Heart left ventricle (tissue), 16 donors: ENCODE measurements at regions of chr15 and their contacts with region 1.

Region 1: GRCh38 chr15:74906446-74907162 is at the start of gene FAM219B:
- DNase-seq: peak; percentile 94 to 96 (median 96)
- ATAC-seq: peak; percentile 92 to 96 (median 92)
- H3K4me3 ChIP-seq: peak within 1 kb of the TSS; percentile 62 to 99 (median 86)
- H3K27ac ChIP-seq: peak within 1 kb of the TSS; percentile 90 to 99 (median 96)
- H3K4me1 ChIP-seq: peaks cover 0 to 31% (median 21%) of the 10 kb centered on the region in 12 donors
- H3K27me3 ChIP-seq: no peaks in the 10 kb centered on the region
- CTCF ChIP-seq: peak in 1 of 12 donors; percentile 8
- POLR2A ChIP-seq: peak; percentile 62 to 92
- total RNA-seq, gene FAM219B: 37.0 to 110 (median 88.8) TPM

Region 2: GRCh38 chr15:74857082-74857655 is 49.4 kb before region 1 on chr15:
- intact Hi-C with region 1: loop called in 1 of 10 experiments (anchors 5 kb)
- DNase-seq: no peak
- ATAC-seq: peak in 2 of 4 donors; percentile 61 to 65
- H3K4me3 ChIP-seq: no peak overlapping the region
- H3K27ac ChIP-seq: peak overlapping the region in 1 of 12 donors; percentile 17
- H3K4me1 ChIP-seq: peaks cover 0 to 46% (median 30%) of the 10 kb centered on the region in 12 donors
- H3K27me3 ChIP-seq: no peaks in the 10 kb centered on the region
- CTCF ChIP-seq: no peak
- POLR2A ChIP-seq: no peak

Region 3: GRCh38 chr15:74873036-74873755 is 33.4 kb before region 1 on chr15 and contains the start of gene SCAMP2:
- intact Hi-C with region 1: loop called in 1 of 10 experiments (anchors 5 kb)
- DNase-seq: peak; percentile 95 to 98 (median 95)
- ATAC-seq: peak; percentile 95 to 97 (median 96)
- H3K4me3 ChIP-seq: peak within 1 kb of the TSS; percentile 55 to 95 (median 84)
- H3K27ac ChIP-seq: peak within 1 kb of the TSS; percentile 82 to 100 (median 94)
- H3K4me1 ChIP-seq: peaks cover 11 to 53% (median 43%) of the 10 kb centered on the region in 12 donors
- H3K27me3 ChIP-seq: no peaks in the 10 kb centered on the region
- CTCF ChIP-seq: no peak
- POLR2A ChIP-seq: peak in 1 of 2 donors; percentile 85
- total RNA-seq, gene SCAMP2: 34.9 to 84.8 (median 46.0) TPM

Region 4: GRCh38 chr15:74937596-74938296 is 31.1 kb after region 1 on chr15 and contains the start of gene COX5A:
- intact Hi-C with region 1: loop called in 3 of 10 experiments (anchors 2 kb)
- DNase-seq: peak; percentile 95 to 97 (median 96)
- ATAC-seq: peak; percentile 92 to 99 (median 96)
- H3K4me3 ChIP-seq: peak within 1 kb of the TSS; percentile 67 to 100 (median 96)
- H3K27ac ChIP-seq: peak within 1 kb of the TSS; percentile 93 to 99 (median 99)
- H3K4me1 ChIP-seq: peaks cover 0 to 45% (median 34%) of the 10 kb centered on the region in 12 donors
- H3K27me3 ChIP-seq: no peaks in the 10 kb centered on the region
- CTCF ChIP-seq: peak in 1 of 12 donors; percentile 5
- POLR2A ChIP-seq: peak in 1 of 2 donors; percentile 92
- total RNA-seq, gene COX5A: 754 to 1,537 (median 1,120) TPM

Region 5: GRCh38 chr15:75130597-75131268 is 224.1 kb after region 1 on chr15:
- intact Hi-C with region 1: no loop called
- DNase-seq: no peak
- ATAC-seq: peak in 1 of 4 donors; percentile 45
- H3K4me3 ChIP-seq: peak overlapping the region in 1 of 12 donors; percentile 37
- H3K27ac ChIP-seq: peak overlapping the region in 2 of 12 donors; percentile 24 to 78
- H3K4me1 ChIP-seq: peaks cover 0 to 40% (median under 1%) of the 10 kb centered on the region in 12 donors
- H3K27me3 ChIP-seq: no peaks in the 10 kb centered on the region
- CTCF ChIP-seq: no peak
- POLR2A ChIP-seq: no peak